ENCODE measurements at regions of chr12 and their contacts with region 1.

Region 1: GRCh38 chr12:11486623-11487444 is 91.5 kb upstream of the PRB2 start:
- DNase-seq: peak; percentile 87
- H3K4me3 Mint-ChIP-seq: no peak overlapping the region
- H3K27ac Mint-ChIP-seq: no peak overlapping the region
- H3K4me1 Mint-ChIP-seq: peaks cover 2% of the 10 kb centered on the region
- H3K27me3 Mint-ChIP-seq: peaks cover 10% of the 10 kb centered on the region

Region 2: GRCh38 chr12:10771132-10771733 is 715.6 kb before region 1 on chr12:
- CTCF ChIA-PET with region 1: interaction called, 17 read pairs
- DNase-seq: no peak
- H3K4me3 Mint-ChIP-seq: no peak overlapping the region
- H3K27ac Mint-ChIP-seq: no peak overlapping the region
- H3K4me1 Mint-ChIP-seq: no peaks in the 10 kb centered on the region
- H3K27me3 Mint-ChIP-seq: peaks cover 23% of the 10 kb centered on the region

Region 3: GRCh38 chr12:11067514-11067913 is 419.3 kb before region 1 on chr12:
- CTCF ChIA-PET with region 1: no interaction called
- DNase-seq: no peak
- H3K4me3 Mint-ChIP-seq: no peak overlapping the region
- H3K27ac Mint-ChIP-seq: no peak overlapping the region
- H3K4me1 Mint-ChIP-seq: no peaks in the 10 kb centered on the region
- H3K27me3 Mint-ChIP-seq: no peaks in the 10 kb centered on the region

Region 4: GRCh38 chr12:11202811-11203210 is 284.0 kb before region 1 on chr12:
- CTCF ChIA-PET with region 1: interaction called, 12 read pairs
- DNase-seq: no peak
- H3K4me3 Mint-ChIP-seq: no peak overlapping the region
- H3K27ac Mint-ChIP-seq: no peak overlapping the region
- H3K4me1 Mint-ChIP-seq: no peaks in the 10 kb centered on the region
- H3K27me3 Mint-ChIP-seq: peaks cover 7% of the 10 kb centered on the region

Region 5: DNA sequence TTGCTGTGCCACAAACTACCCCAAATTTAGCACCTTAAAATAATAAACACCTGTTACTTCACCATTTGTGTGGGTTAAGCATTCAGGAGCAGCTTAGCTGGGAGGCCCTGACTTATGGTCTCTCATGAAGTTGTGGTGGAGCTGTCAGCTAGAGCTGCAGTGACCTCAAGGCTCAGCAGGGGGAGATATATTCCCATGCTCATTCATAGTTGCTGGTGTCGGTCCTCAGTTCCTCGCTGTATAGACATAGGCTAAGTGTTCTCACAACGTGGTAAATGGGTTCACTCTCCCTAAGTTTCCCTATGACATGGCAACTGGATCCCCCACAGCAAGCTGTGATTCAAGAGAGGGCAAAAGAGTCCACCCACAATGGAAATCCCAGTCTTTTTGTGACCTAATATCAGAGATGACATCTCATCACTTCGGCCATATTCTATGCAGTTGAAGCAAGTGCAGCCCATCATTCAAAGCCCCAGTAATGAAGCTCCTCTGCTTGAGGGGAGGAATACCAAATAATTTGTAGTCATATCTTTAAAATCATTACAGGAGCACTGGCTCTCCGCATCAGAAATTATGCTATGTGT is 258.4 kb before region 1 on chr12:
- CTCF ChIA-PET with region 1: interaction called, 22 read pairs
- DNase-seq: peak; percentile 56
- H3K4me3 Mint-ChIP-seq: no peak overlapping the region
- H3K27ac Mint-ChIP-seq: no peak overlapping the region
- H3K4me1 Mint-ChIP-seq: no peaks in the 10 kb centered on the region
- H3K27me3 Mint-ChIP-seq: peaks cover 3% of the 10 kb centered on the region

Region 6: DNA sequence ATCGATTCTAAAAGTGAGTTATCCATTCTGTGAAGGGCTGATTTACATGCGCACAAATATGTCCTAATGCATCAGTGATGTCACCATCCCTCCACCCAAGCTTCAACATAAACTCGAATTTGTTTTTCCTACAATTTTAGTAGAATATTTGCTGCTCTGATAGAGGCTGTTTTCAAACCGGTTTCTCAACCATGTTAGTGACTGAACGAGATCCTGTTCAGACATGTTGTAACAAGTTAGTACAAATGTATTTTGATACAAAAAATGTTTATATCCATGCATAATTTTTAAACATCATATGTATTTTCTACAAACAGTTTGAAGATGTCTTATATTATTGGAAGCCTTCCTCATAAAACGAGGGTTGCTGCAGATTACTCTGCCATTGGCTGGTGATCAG is 78.7 kb before region 1 on chr12:
- CTCF ChIA-PET with region 1: no interaction called
- DNase-seq: no peak
- H3K4me3 Mint-ChIP-seq: no peak overlapping the region
- H3K27ac Mint-ChIP-seq: no peak overlapping the region
- H3K4me1 Mint-ChIP-seq: no peaks in the 10 kb centered on the region
- H3K27me3 Mint-ChIP-seq: no peaks in the 10 kb centered on the region

Region 7: GRCh38 chr12:11595080-11595479 is 108.2 kb after region 1 on chr12:
- CTCF ChIA-PET with region 1: no interaction called
- DNase-seq: no peak
- H3K4me3 Mint-ChIP-seq: no peak overlapping the region
- H3K27ac Mint-ChIP-seq: no peak overlapping the region
- H3K4me1 Mint-ChIP-seq: no peaks in the 10 kb centered on the region
- H3K27me3 Mint-ChIP-seq: peaks cover 8% of the 10 kb centered on the region

Measured in activated naive CD4-positive, alpha-beta T cell treated with anti-CD3 and anti-CD28 coated beads, Interleukin-2, amount 10 ng/mL, durations not matched to agents 7 days and 5 days (primary cell).